ENCODE measurements at regions of chr10 and their contacts with region 1.

Region 1: GRCh38 chr10:123132576-123133477 is 2.9 kb upstream of the HMX3 start:
- DNase-seq: peak; percentile 71
- ATAC-seq: peak; percentile 82
- H3K4me3 ChIP-seq: peak overlapping the region; percentile 34 to 41
- H3K27ac ChIP-seq: 0 out of 2 replicates have a peak overlapping the region, but pooled peaks have one; percentile 17
- H3K4me1 ChIP-seq: peaks cover 11% of the 10 kb centered on the region; the same call in 1 of the 2 replicates
- H3K27me3 ChIP-seq: no peaks in the 10 kb centered on the region; the same call in 1 of the 2 replicates
- CTCF ChIP-seq: peak; percentile 98

Region 2: GRCh38 chr10:123154092-123154921 is 21.5 kb after region 1 on chr10 and contains the start of gene BUB3:
- CTCF ChIA-PET with region 1: interaction called, 4 read pairs
- POLR2A ChIA-PET with region 1: interaction called, 3 read pairs
- in situ Hi-C with region 1: no loop called
- intact Hi-C with region 1: loop called (anchors 1 kb)
- DNase-seq: peak; percentile 100
- ATAC-seq: peak; percentile 96
- H3K4me3 ChIP-seq: peak within 1 kb of the TSS; percentile 81 to 85
- H3K27ac ChIP-seq: peak within 1 kb of the TSS; percentile 90
- H3K4me1 ChIP-seq: peaks cover 62% of the 10 kb centered on the region
- H3K27me3 ChIP-seq: no peaks in the 10 kb centered on the region
- CTCF ChIP-seq: no peak
- total RNA-seq, gene BUB3: 237 TPM

Region 3: GRCh38 chr10:123175389-123176387 is 42.9 kb after region 1 on chr10:
- CTCF ChIA-PET with region 1: no interaction called
- POLR2A ChIA-PET with region 1: no interaction called
- in situ Hi-C with region 1: no loop called
- intact Hi-C with region 1: no loop called
- DNase-seq: no peak
- ATAC-seq: peak; percentile 71
- H3K4me3 ChIP-seq: no peak overlapping the region
- H3K27ac ChIP-seq: no peak overlapping the region
- H3K4me1 ChIP-seq: no peaks in the 10 kb centered on the region
- H3K27me3 ChIP-seq: no peaks in the 10 kb centered on the region
- CTCF ChIP-seq: no peak

Region 4: DNA sequence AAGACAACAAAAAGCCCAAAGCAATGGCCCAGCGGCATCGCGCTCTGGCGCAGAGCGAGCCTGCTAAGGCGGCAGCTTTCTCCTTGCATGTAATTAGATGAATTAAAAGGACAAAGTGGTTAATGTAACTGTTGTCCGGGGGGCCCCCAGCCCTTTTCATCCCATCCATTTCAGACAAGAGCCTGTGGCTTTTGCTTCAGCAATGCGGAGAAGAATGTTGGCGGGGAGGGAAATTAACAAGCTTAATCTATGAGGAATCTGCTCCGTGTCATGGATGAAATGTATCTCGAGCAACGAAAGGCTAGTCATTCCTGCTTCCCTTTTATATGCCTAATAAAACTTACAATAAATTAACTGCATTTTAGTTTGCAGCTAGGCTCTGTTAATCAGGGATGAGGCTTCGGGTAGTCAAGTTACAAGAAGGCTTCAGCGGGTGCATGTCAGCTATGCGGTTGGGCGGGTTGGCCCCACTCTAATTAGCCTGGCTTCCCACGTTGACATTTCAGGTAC is 224.6 kb after region 1 on chr10:
- CTCF ChIA-PET with region 1: no interaction called
- POLR2A ChIA-PET with region 1: no interaction called
- in situ Hi-C with region 1: no loop called
- intact Hi-C with region 1: no loop called
- DNase-seq: no peak
- ATAC-seq: no peak
- H3K4me3 ChIP-seq: no peak overlapping the region
- H3K27ac ChIP-seq: no peak overlapping the region
- H3K4me1 ChIP-seq: no peaks in the 10 kb centered on the region
- H3K27me3 ChIP-seq: no peaks in the 10 kb centered on the region
- CTCF ChIP-seq: no peak

Measured in Panc1 (cell line).